BJ (cell line): ENCODE measurements at regions of chr1 and their contacts with region 1.

Region 1: GRCh38 chr1:53485478-53486394 is 26.5 kb downstream of the DMRTB1 start:
- DNase-seq: no peak
- H3K4me3 ChIP-seq: no peak overlapping the region
- H3K27me3 ChIP-seq: peaks cover 23% of the 10 kb centered on the region
- CTCF ChIP-seq: peak; percentile 95

Region 2: DNA sequence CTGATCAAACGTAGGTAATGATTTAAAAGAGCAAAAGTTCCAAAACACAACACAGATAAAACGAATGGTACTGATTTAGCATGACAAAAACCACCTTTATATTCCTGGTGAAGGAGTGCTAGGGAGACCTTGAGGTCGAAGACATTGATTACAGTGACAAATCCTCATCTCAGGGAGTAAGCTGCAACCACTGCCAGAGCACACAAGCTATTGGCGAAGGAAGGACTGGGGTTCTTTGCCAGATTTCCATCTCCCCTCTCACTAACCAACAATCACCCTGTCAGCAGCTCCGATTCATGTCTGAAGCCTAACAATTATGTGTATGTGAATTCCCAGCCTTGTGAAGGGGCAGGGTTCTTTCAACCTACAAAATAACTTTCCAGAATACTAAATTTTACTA is 66.7 kb before region 1 on chr1:
- CTCF ChIA-PET with region 1: no interaction called
- POLR2A ChIA-PET with region 1: no interaction called
- DNase-seq: no peak
- H3K4me3 ChIP-seq: no peak overlapping the region
- H3K27me3 ChIP-seq: peaks cover 9% of the 10 kb centered on the region
- CTCF ChIP-seq: no peak

Region 3: DNA sequence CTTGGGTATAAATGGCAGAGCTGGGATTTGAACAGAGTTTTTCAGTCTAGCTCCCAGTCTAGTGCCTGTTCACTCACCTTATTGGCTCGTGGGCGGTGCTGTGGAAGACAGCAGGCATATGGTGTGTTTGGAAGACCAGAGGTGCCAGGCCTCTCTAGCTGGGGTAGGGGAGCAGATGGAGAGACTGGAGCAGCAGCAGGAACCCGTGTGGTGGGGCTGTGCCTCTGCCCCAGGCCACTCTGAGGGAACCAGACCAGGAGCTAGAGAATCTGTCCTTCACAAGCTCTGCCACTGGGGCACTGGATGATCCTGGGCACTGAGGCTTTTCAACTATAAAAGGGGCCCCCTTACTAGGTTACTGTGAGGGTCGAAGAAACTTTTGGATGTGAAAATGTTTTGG is 20.7 kb before region 1 on chr1:
- CTCF ChIA-PET with region 1: interaction called, 12 read pairs
- POLR2A ChIA-PET with region 1: no interaction called
- DNase-seq: no peak
- H3K4me3 ChIP-seq: no peak overlapping the region
- H3K27me3 ChIP-seq: peaks cover 3% of the 10 kb centered on the region; the same call in 1 of the 2 replicates
- CTCF ChIP-seq: no peak

Region 4: DNA sequence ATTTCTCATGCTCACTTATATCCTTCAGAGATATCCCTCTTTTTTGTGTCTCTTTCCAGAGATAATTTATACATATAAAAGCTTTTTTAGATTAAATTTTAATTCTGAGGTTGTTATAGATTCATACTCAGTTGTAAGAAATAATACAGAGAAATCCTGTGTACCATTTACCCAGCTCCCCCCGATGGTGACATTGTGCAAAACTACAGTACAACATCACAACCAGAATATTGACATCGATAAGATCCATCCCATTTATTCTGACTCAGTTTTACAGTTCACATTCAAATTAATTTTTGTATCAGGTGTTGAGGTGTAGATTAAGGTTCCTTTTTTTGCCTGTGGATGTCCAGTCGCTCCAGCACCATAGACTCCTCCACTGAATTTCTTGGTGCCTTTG is 12.3 kb before region 1 on chr1:
- CTCF ChIA-PET with region 1: interaction called, 47 read pairs
- POLR2A ChIA-PET with region 1: no interaction called
- DNase-seq: no peak
- H3K4me3 ChIP-seq: no peak overlapping the region
- H3K27me3 ChIP-seq: peaks cover 18% of the 10 kb centered on the region
- CTCF ChIP-seq: peak; percentile 56

Region 5: GRCh38 chr1:53535226-53535625 is 49.5 kb after region 1 on chr1:
- CTCF ChIA-PET with region 1: no interaction called
- POLR2A ChIA-PET with region 1: no interaction called
- DNase-seq: no peak
- H3K4me3 ChIP-seq: no peak overlapping the region
- H3K27me3 ChIP-seq: no peaks in the 10 kb centered on the region
- CTCF ChIP-seq: no peak

Region 6: GRCh38 chr1:53669637-53670191 is 184.0 kb after region 1 on chr1:
- CTCF ChIA-PET with region 1: no interaction called
- POLR2A ChIA-PET with region 1: no interaction called
- DNase-seq: no peak
- H3K4me3 ChIP-seq: no peak overlapping the region
- H3K27me3 ChIP-seq: no peaks in the 10 kb centered on the region; the same call in 1 of the 2 replicates
- CTCF ChIP-seq: no peak

Region 7: DNA sequence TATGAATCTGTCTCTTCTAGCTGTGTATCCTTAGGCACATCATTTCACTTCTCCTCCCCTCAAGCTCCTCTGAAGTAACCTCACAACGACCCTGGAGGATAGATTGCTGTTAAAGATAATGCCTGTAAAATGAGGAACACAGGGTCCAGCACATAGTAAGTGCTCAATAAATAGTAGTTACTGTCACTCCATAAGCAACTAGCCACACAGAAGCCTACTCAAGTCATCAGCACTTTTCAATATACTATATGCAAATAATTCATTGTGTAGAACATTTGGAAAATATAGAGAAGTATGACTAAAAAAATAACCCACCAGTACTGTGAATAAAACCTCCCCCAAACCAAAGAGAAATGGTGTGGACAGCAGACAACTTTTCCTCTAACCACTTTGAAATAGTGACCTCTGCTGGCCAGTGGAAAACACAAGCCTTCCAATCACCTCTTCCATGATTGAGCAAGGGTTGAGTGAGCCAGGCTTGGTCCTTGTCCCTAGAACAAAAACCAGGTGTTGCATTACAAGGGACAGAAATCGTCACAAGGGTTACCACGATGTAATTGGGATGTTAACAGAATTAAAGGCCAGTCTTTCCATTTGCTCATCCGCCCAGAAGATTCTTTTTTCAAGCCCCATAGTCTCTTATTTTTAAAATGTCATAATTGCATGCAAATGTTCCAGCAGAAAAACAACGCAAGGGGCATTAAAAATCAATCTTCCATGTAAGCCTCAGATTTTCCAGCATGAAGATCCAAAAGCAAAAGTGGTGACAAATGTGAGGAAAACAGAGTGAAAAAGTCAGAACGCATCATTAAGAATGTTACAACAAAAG is 269.0 kb after region 1 on chr1:
- CTCF ChIA-PET with region 1: interaction called, 117 read pairs
- POLR2A ChIA-PET with region 1: no interaction called
- DNase-seq: no peak
- H3K4me3 ChIP-seq: no peak overlapping the region
- H3K27me3 ChIP-seq: no peaks in the 10 kb centered on the region
- CTCF ChIP-seq: peak; percentile 78

Region 8: GRCh38 chr1:53763461-53763860 is 277.7 kb after region 1 on chr1:
- CTCF ChIA-PET with region 1: interaction called, 117 read pairs
- POLR2A ChIA-PET with region 1: no interaction called
- DNase-seq: no peak
- H3K4me3 ChIP-seq: no peak overlapping the region
- H3K27me3 ChIP-seq: no peaks in the 10 kb centered on the region
- CTCF ChIP-seq: no peak